PC-3 (cell line): ENCODE measurements at regions of chr1 and their contacts with region 1.

Region 1: GRCh38 chr1:155172732-155173477 is at the start of gene KRTCAP2:
- DNase-seq: peak; percentile 99
- ATAC-seq: peak; percentile 70
- H3K4me3 ChIP-seq: peak within 1 kb of the TSS; percentile 83
- H3K27ac ChIP-seq: peak within 1 kb of the TSS; percentile 62
- H3K4me1 ChIP-seq: peaks cover 29% of the 10 kb centered on the region
- H3K27me3 ChIP-seq: no peaks in the 10 kb centered on the region
- CTCF ChIP-seq: peak; percentile 97
- total RNA-seq, gene KRTCAP2: 241 and 257 TPM in 2 replicates

Region 2: DNA sequence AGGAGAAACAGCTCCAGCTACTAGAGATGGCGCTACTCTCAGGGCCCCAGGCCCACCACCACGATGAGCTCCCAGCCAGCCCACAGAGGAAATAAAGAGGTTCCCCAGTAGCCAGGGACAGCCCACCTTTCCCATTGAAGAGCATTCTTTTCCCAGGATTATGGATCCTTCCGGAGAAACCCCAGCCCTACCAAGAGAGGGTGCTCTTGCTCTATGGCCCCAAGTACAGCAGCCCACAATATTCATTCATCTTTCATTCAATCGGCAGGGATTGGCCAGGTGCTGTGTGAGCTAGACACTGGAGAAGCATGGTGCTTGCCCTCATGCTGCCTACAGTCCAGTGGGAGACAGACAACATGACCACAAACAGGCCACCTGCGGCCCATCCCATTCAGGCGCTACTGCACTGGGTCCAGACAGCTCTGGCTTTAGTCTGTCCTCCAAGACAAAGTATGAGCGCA is 266.3 kb before region 1 on chr1:
- CTCF ChIA-PET with region 1: no interaction called
- POLR2A ChIA-PET with region 1: no interaction called
- intact Hi-C with region 1: no loop called
- DNase-seq: peak; percentile 58
- ATAC-seq: peak; percentile 70
- H3K4me3 ChIP-seq: no peak overlapping the region
- H3K27ac ChIP-seq: no peak overlapping the region
- H3K4me1 ChIP-seq: no peaks in the 10 kb centered on the region
- H3K27me3 ChIP-seq: no peaks in the 10 kb centered on the region
- CTCF ChIP-seq: peak; percentile 74

Region 3: DNA sequence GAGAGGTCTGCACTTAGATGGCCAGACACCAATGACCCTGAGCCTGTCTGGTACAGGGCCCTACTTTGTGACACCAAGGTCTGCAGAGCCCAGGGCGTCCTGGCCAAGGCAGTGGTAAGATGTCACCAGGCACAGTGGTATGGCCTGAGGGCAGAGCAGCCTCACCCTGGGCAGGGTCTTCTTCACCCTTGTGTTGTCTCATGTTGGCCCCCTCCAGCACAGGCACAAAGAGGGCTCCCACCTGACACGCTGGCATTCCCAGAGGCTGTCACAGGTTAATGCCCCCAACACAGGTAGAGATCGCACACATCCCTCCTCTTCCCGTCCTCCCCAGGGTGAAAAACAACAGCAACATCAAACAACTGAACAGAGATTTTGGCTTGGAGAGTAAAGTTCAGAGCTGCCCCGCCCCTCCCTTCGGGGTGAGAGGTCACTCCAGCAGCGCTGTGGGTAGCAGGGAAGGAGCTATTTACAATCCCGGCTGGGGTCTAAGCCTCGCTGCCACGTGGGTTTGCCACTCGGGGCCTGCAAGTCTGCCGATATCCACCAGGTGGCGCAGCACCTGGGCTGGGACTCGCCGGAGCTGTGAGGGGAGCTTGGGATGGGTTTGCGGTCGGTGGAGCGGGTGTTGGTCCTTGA is 81.7 kb before region 1 on chr1:
- CTCF ChIA-PET with region 1: interaction called, 57 read pairs
- POLR2A ChIA-PET with region 1: interaction called, 6 read pairs
- intact Hi-C with region 1: no loop called
- DNase-seq: peak; percentile 93
- ATAC-seq: peak; percentile 72
- H3K4me3 ChIP-seq: peak overlapping the region; percentile 45
- H3K27ac ChIP-seq: no peak overlapping the region
- H3K4me1 ChIP-seq: peaks cover 15% of the 10 kb centered on the region
- H3K27me3 ChIP-seq: no peaks in the 10 kb centered on the region
- CTCF ChIP-seq: peak; percentile 99

Region 4: GRCh38 chr1:155193275-155193990 is 20.5 kb after region 1 on chr1:
- CTCF ChIA-PET with region 1: interaction called, 25 read pairs
- POLR2A ChIA-PET with region 1: interaction called, 8 read pairs
- intact Hi-C with region 1: loop called (anchors 2 kb)
- DNase-seq: peak; percentile 96
- ATAC-seq: peak; percentile 82
- H3K4me3 ChIP-seq: peak overlapping the region; percentile 70
- H3K27ac ChIP-seq: peak overlapping the region; percentile 75
- H3K4me1 ChIP-seq: peaks cover 27% of the 10 kb centered on the region
- H3K27me3 ChIP-seq: no peaks in the 10 kb centered on the region
- CTCF ChIP-seq: peak; percentile 99

Region 5: DNA sequence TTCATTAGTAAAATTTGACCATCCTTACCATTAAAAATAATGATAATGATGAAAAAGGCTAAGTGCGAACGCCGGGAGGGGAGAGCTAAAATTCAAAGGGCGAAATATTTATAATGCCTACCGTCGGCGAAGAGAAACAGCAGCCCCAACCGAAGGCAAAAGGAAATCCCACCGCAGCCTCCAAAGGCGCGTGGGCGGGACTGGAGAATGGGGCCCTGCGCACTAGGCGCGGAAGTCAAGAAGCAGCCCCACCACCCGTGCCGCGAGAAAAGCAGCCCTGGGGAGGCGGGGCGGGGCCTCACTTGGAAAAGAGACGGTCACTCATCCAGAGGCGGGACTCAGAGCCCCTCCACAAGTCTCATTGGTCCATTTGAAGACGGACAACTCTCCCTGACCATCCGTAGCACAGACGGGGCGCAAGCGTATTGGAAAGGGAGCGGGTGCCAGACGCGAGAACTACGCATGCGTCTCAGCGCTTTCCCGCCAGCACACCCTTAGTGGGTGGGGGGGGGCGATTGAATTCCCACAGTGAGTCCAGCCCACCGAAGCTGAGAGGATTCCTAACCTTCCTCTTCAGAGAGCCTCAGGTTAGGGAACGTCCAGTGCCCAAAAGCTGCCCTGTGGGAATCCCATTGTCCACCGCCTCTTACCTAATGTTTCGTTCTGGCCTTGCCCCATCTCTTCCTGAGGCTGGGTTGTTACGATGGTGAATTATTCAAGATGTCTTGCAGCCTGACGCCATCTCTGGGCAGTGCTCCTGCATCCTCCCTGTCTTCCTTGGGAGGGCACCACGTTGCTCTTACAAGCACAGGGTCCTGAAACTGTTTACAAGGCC is 54.6 kb after region 1 on chr1:
- CTCF ChIA-PET with region 1: interaction called, 7 read pairs
- POLR2A ChIA-PET with region 1: no interaction called
- intact Hi-C with region 1: loop called (anchors 1 kb)
- DNase-seq: peak; percentile 100
- ATAC-seq: peak; percentile 96
- H3K4me3 ChIP-seq: peak overlapping the region; percentile 76
- H3K27ac ChIP-seq: peak overlapping the region; percentile 55
- H3K4me1 ChIP-seq: peaks cover 45% of the 10 kb centered on the region
- H3K27me3 ChIP-seq: no peaks in the 10 kb centered on the region
- CTCF ChIP-seq: no peak

Region 6: GRCh38 chr1:155437405-155437804 is 264.5 kb after region 1 on chr1:
- CTCF ChIA-PET with region 1: no interaction called
- POLR2A ChIA-PET with region 1: no interaction called
- intact Hi-C with region 1: no loop called
- DNase-seq: no peak
- ATAC-seq: no peak
- H3K4me3 ChIP-seq: no peak overlapping the region
- H3K27ac ChIP-seq: no peak overlapping the region
- H3K4me1 ChIP-seq: no peaks in the 10 kb centered on the region
- H3K27me3 ChIP-seq: no peaks in the 10 kb centered on the region
- CTCF ChIP-seq: no peak

Region 7: GRCh38 chr1:155591770-155592169 is 418.9 kb after region 1 on chr1:
- CTCF ChIA-PET with region 1: no interaction called
- POLR2A ChIA-PET with region 1: no interaction called
- intact Hi-C with region 1: loop called (anchors 5 kb)
- DNase-seq: peak; percentile 82
- ATAC-seq: peak; percentile 79
- H3K4me3 ChIP-seq: no peak overlapping the region
- H3K27ac ChIP-seq: no peak overlapping the region
- H3K4me1 ChIP-seq: no peaks in the 10 kb centered on the region
- H3K27me3 ChIP-seq: no peaks in the 10 kb centered on the region
- CTCF ChIP-seq: peak; percentile 75